ENCODE measurements at regions of chr15 and their contacts with region 1.

Region 1: GRCh38 chr15:89206908-89207331 is 14.5 kb downstream of the RLBP1 start:
- DNase-seq: peak; percentile 34 to 95 (median 67)
- ATAC-seq: peak; percentile 93
- H3K4me3 ChIP-seq: no peak overlapping the region
- H3K27ac ChIP-seq: no peak overlapping the region
- H3K4me1 ChIP-seq: peaks cover 0 to 9% of the 10 kb centered on the region in 2 donors
- H3K27me3 ChIP-seq: no peaks in the 10 kb centered on the region
- CTCF ChIP-seq: peak; percentile 96 to 99

Region 2: GRCh38 chr15:89087830-89088604 is 118.9 kb before region 1 on chr15 and contains the start of gene ABHD2:
- intact Hi-C with region 1: no loop called
- DNase-seq: peak; percentile 97 to 100 (median 99)
- ATAC-seq: peak; percentile 90
- H3K4me3 ChIP-seq: peak within 1 kb of the TSS; percentile 79 to 85
- H3K27ac ChIP-seq: peak within 1 kb of the TSS; percentile 84 to 90
- H3K4me1 ChIP-seq: peaks cover 18 to 50% of the 10 kb centered on the region in 2 donors
- H3K27me3 ChIP-seq: no peaks in the 10 kb centered on the region
- CTCF ChIP-seq: no peak
- polyA plus RNA-seq, gene ABHD2: 35.4 to 51.1 (median 45.2) TPM

Region 3: GRCh38 chr15:89299896-89300295 is 93.0 kb after region 1 on chr15:
- intact Hi-C with region 1: loop called in 1 of 2 experiments (anchors 10 kb)
- DNase-seq: peak in 1 of 4 donors; percentile 14
- ATAC-seq: peak; percentile 85
- H3K4me3 ChIP-seq: no peak overlapping the region
- H3K27ac ChIP-seq: no peak overlapping the region
- H3K4me1 ChIP-seq: no peaks in the 10 kb centered on the region
- H3K27me3 ChIP-seq: no peaks in the 10 kb centered on the region
- CTCF ChIP-seq: no peak

Region 4: GRCh38 chr15:89399238-89400120 is 192.6 kb after region 1 on chr15:
- intact Hi-C with region 1: no loop called
- DNase-seq: no peak
- ATAC-seq: peak; percentile 20
- H3K4me3 ChIP-seq: peak overlapping the region in 1 of 2 donors; percentile 33
- H3K27ac ChIP-seq: no peak overlapping the region
- H3K4me1 ChIP-seq: peaks cover 8 to 36% of the 10 kb centered on the region in 2 donors
- H3K27me3 ChIP-seq: peaks cover 63 to 99% of the 10 kb centered on the region in 2 donors
- CTCF ChIP-seq: peak in 1 of 2 donors; percentile 7